ENCODE measurements at regions of chr19 and their contacts with region 1.

Region 1: GRCh38 chr19:4867534-4868285 is at the start of gene PLIN3:
- DNase-seq: peak; percentile 89 to 96 (median 95)
- H3K4me3 ChIP-seq: peak within 1 kb of the TSS; percentile 67 to 100 (median 92)
- H3K4me3 Mint-ChIP-seq: peak within 1 kb of the TSS; percentile 92 to 94
- H3K27ac ChIP-seq: peak within 1 kb of the TSS; percentile 71 to 90
- H3K27ac Mint-ChIP-seq: peak within 1 kb of the TSS; percentile 86 to 96 (median 93)
- H3K4me1 ChIP-seq: peaks cover 48 to 51% of the 10 kb centered on the region in 2 donors
- H3K4me1 Mint-ChIP-seq: peaks cover 51% of the 10 kb centered on the region
- H3K27me3 ChIP-seq: no peaks in the 10 kb centered on the region
- H3K27me3 Mint-ChIP-seq: peaks cover 0 to 4% (median 0%) of the 10 kb centered on the region in 3 donors
- CTCF ChIP-seq: no peak
- polyA plus RNA-seq, gene PLIN3: 78.8 to 151 (median 138) TPM

Region 2: DNA sequence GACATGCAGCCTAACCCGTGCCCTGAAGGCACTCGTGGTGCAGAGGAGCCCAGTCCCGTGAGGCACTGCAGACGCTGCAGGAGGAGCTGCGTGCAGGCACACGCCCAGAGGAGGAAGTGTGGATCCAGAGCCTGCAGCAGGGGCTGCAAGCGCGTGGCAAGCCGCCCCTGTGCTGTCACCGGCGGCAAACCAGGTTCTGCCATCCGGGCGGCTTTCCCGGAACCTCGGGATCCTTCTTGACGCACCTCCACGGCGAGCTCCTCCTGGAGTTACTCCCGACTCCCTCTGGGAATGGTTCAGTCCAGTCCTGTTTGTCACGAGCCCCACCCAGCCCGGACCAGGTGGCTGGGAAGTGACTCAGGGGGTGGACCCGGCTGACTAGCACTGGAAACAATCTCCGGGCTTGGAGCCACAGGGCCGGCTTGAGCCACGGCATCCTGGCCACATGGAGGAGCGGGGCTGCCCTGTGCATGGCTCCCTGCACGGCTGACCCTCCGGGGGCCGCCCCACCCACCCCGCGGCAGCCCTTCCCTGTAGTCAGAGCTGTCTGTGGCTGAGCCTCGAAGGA is 154.2 kb before region 1 on chr19:
- intact Hi-C with region 1: no loop called
- DNase-seq: no peak
- H3K4me3 ChIP-seq: no peak overlapping the region
- H3K4me3 Mint-ChIP-seq: no peak overlapping the region
- H3K27ac ChIP-seq: no peak overlapping the region
- H3K27ac Mint-ChIP-seq: peak overlapping the region in 1 of 7 donors; percentile 36
- H3K4me1 ChIP-seq: no peaks in the 10 kb centered on the region
- H3K4me1 Mint-ChIP-seq: no peaks in the 10 kb centered on the region
- H3K27me3 ChIP-seq: no peaks in the 10 kb centered on the region
- H3K27me3 Mint-ChIP-seq: no peaks in the 10 kb centered on the region
- CTCF ChIP-seq: no peak

Region 3: DNA sequence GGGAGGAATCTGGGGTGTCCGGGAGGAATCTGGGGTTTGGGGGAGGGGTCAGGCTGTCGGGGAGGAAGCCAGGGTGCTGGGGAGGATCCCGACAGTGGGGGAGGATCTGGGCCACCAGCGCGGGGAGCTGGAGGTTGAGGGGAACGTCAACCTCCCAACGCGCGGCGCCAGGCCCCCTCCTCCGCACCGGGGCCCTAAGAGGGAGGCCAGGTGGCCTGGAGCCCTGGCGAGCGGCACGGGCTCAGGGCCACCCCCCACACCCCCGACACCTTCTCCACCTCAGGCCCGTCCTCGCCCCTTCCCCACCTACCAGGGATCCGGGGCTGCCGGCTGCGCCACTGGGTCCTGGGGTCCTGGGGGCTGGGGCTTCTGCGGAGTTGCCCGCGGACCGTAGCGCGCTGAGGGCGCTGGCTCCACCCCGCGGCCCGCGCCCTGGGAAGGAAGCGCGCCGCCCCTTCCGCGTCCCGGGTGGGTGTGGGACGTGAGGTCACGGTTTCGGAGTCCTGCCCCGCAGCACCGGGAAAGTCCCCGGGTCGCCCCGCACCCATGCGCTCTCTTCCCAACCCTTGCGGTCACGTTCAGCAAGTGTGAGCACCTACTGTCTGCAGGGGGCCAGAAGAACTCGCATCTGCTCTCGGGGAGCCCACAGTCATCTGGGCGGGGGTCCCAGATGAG is 36.3 kb before region 1 on chr19 and contains the start of gene TICAM1:
- intact Hi-C with region 1: loop called in 1 of 2 experiments (anchors 5 kb)
- DNase-seq: peak; percentile 87 to 97 (median 91)
- H3K4me3 ChIP-seq: peak within 1 kb of the TSS; percentile 67 to 91 (median 82)
- H3K4me3 Mint-ChIP-seq: peak within 1 kb of the TSS; percentile 96
- H3K27ac ChIP-seq: peak within 1 kb of the TSS; percentile 88 to 96
- H3K27ac Mint-ChIP-seq: peak within 1 kb of the TSS; percentile 91 to 98 (median 94)
- H3K4me1 ChIP-seq: peaks cover 24 to 28% of the 10 kb centered on the region in 2 donors
- H3K4me1 Mint-ChIP-seq: peaks cover 26% of the 10 kb centered on the region
- H3K27me3 ChIP-seq: no peaks in the 10 kb centered on the region
- H3K27me3 Mint-ChIP-seq: peaks cover 0 to 6% (median 0%) of the 10 kb centered on the region in 3 donors
- CTCF ChIP-seq: no peak
- polyA plus RNA-seq, gene TICAM1: 5.9 to 10.7 (median 9.2) TPM

Region 4: DNA sequence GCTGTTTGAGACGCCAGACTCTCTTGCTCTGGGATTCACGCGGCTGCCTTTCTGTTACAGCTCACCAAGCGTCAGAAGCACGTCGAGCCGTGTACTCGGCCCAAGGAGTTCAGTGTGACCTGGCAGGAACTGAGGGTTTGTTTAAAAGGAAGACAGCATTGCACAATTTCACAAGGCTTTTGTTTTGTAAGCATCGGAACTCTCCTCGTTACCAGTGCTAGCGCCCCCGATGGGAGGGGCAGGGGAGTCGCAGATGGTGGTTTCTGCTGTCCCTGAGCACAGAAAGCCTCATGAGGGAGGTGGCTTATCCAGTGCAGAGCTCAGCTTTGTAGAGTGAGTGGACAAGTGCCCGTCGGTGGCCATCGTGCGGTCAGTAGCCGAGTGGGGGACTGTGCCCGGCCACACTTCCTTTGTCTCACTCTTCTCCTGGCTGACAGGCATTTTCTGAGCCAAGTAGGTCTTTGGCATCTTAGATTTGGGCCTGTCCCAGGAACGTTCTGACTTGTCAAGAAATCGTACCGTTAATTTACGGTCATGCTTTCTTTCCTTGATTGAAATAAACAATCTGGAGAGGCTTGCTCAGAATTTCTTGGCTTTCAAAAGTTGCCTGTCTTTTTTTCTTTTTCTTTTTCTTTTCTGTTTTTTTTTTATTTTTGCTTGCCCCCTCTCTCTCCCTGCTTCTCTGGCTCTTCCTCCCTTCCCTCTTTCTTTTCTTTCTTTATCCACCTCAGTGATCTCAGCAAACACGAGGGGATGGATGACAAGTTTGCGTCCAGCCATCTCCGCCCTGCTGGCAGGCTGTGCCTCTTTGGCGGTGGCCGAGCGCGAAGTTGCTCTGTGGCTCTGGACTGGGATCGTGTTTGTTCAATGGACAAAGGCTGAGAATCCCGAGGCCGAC is 108.9 kb after region 1 on chr19:
- intact Hi-C with region 1: loop called in 1 of 2 experiments (anchors 10 kb)
- DNase-seq: peak; percentile 95 to 98 (median 96)
- H3K4me3 ChIP-seq: peak overlapping the region in 1 of 3 experiments; percentile 56
- H3K4me3 Mint-ChIP-seq: peak overlapping the region; percentile 59 to 69
- H3K27ac ChIP-seq: peak overlapping the region; percentile 84 to 96
- H3K27ac Mint-ChIP-seq: peak overlapping the region; percentile 98 to 99 (median 99)
- H3K4me1 ChIP-seq: peaks cover 63 to 72% of the 10 kb centered on the region in 2 donors
- H3K4me1 Mint-ChIP-seq: peaks cover 70% of the 10 kb centered on the region
- H3K27me3 ChIP-seq: no peaks in the 10 kb centered on the region
- H3K27me3 Mint-ChIP-seq: peaks cover 0 to 3% (median 0%) of the 10 kb centered on the region in 3 donors
- CTCF ChIP-seq: peak; percentile 68

Measured in CD14-positive monocyte (primary cell).